ENCODE measurements at regions of chr1 and their contacts with region 1.

Region 1: GRCh38 chr1:201970334-201971159 is 11.9 kb upstream of the RNPEP start:
- DNase-seq: no peak
- H3K4me3 ChIP-seq: no peak overlapping the region
- H3K27ac ChIP-seq: no peak overlapping the region
- H3K4me1 ChIP-seq: no peaks in the 10 kb centered on the region
- H3K27me3 ChIP-seq: no peaks in the 10 kb centered on the region
- CTCF ChIP-seq: no peak
- POLR2A ChIP-seq: no peak

Region 2: GRCh38 chr1:201828820-201829774 is 141.4 kb before region 1 on chr1 and contains the start of gene IPO9:
- intact Hi-C with region 1: no loop called
- DNase-seq: peak; percentile 94 to 95
- H3K4me3 ChIP-seq: peak within 1 kb of the TSS; percentile 98 to 99
- H3K27ac ChIP-seq: peak within 1 kb of the TSS; percentile 93 to 98
- H3K4me1 ChIP-seq: peaks cover 0 to 6% of the 10 kb centered on the region in 2 donors
- H3K27me3 ChIP-seq: no peaks in the 10 kb centered on the region
- CTCF ChIP-seq: peak; percentile 93 to 99 (median 97)
- POLR2A ChIP-seq: peak; percentile 69 to 72
- total RNA-seq, gene IPO9: 8.8 to 48.5 (median 35.2) TPM

Region 3: DNA sequence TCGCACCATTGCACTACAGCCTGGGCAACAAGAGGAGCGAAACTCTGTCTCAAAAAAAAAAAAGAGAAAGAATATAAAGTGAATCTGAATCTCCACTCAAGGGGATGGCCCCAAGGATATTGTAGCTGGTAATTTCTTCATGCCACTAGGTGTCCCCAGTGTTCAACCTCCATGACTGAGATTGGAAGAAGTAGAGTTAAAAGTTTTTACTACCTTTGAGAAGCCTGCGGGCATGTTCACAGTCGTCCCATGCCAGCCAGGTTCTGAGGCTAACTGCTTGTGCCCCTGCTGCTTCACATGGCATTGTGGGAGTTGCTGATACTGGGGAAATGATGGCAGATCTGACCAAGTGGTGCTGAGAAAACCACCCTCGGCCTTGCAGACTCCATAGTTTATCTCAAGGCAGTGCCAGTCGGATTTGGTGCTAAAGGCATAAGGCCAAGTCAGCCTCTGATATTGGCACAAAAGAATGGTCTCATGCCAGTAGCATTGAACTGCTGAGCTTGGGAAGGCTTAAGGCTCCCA is 92.6 kb before region 1 on chr1:
- intact Hi-C with region 1: loop called (anchors 5 kb)
- DNase-seq: peak in 1 of 2 donors; percentile 40
- H3K4me3 ChIP-seq: no peak overlapping the region
- H3K27ac ChIP-seq: peak overlapping the region; percentile 1 to 35
- H3K4me1 ChIP-seq: no peaks in the 10 kb centered on the region
- H3K27me3 ChIP-seq: no peaks in the 10 kb centered on the region
- CTCF ChIP-seq: peak; percentile 64 to 76 (median 72)
- POLR2A ChIP-seq: no peak

Measured in uterus (tissue), 4 donors.